PC-9 (cell line): ENCODE measurements at regions of chr2 and their contacts with region 1.

Region 1: GRCh38 chr2:176496761-176497160 is 227.5 kb downstream of the MTX2 start:
- DNase-seq: no peak
- H3K4me3 ChIP-seq: no peak overlapping the region
- H3K27ac ChIP-seq: no peak overlapping the region
- H3K4me1 ChIP-seq: no peaks in the 10 kb centered on the region
- H3K27me3 ChIP-seq: peaks cover 8% of the 10 kb centered on the region; the same call in 1 of the 2 replicates
- CTCF ChIP-seq: no peak

Region 2: GRCh38 chr2:176526995-176527901 is 30.5 kb after region 1 on chr2:
- CTCF ChIA-PET with region 1: no interaction called
- POLR2A ChIA-PET with region 1: no interaction called
- intact Hi-C with region 1: loop called (anchors 1 kb)
- DNase-seq: no peak
- H3K4me3 ChIP-seq: no peak overlapping the region
- H3K27ac ChIP-seq: no peak overlapping the region
- H3K4me1 ChIP-seq: no peaks in the 10 kb centered on the region
- H3K27me3 ChIP-seq: no peaks in the 10 kb centered on the region; the same call in 1 of the 2 replicates
- CTCF ChIP-seq: no peak